GM10248 (cell line): ENCODE measurements at regions of chr1 and their contacts with region 1.

Region 1: DNA sequence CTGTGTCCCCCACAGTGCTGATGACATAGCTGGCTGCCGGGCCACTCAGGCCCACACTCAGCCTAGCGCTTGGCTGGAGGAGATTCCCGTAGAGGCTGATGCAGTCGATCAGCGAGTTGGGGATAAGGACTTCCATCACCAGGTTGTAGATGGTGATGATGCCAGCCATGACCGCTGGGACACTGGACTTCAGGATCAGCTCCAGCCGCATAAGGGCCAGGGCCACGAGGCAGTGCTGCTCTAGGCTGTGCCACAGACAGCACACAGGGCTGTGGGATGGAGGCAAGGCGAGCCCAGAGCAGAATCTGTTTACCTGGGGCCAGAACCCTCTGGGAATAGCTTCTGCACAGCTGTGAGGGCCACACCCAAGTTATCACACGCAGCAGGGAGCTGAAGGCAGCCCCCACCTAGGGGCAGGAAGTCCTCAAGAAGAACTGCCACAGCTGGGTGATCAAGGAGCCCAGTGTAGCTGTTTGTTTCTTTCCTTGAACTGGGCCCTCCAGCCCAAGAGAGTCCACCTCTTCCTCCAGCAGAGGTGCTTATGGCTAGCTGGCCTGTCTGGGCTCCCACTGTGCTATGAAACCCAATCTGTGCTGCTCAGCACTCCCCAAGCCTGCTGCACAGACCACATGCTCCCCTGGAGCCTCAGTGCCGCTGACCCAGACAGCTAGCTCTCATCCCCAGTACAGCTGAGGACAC is 6.2 kb downstream of the SLC2A1 start:
- DNase-seq: peak; percentile 61
- CTCF ChIP-seq: no peak

Region 2: GRCh38 chr1:42936309-42937078 is 16.0 kb before region 1 on chr1:
- CTCF ChIA-PET with region 1: interaction called, 21 read pairs
- POLR2A ChIA-PET with region 1: interaction called, 27 read pairs
- DNase-seq: no peak
- CTCF ChIP-seq: no peak